Activated CD4-positive, alpha-beta T cell treated with anti-CD3 and anti-CD28 coated beads, Interleukin-2, amount 10 ng/mL, durations not matched to agents 24 days and 14 days (primary cell): ENCODE measurements at regions of chr17 and their contacts with region 1.

Region 1: GRCh38 chr17:49191917-49192741 is 18.2 kb downstream of the GNGT2 start:
- DNase-seq: peak; percentile 98
- H3K4me3 Mint-ChIP-seq: peak overlapping the region; percentile 95
- H3K27ac Mint-ChIP-seq: peak overlapping the region; percentile 99
- H3K4me1 Mint-ChIP-seq: peaks cover 48% of the 10 kb centered on the region
- H3K27me3 Mint-ChIP-seq: no peaks in the 10 kb centered on the region

Region 2: GRCh38 chr17:48892940-48893645 is 299.0 kb before region 1 on chr17:
- intact Hi-C with region 1: loop called (anchors 1 kb)
- DNase-seq: no peak
- H3K4me3 Mint-ChIP-seq: peak overlapping the region; percentile 90
- H3K27ac Mint-ChIP-seq: peak overlapping the region; percentile 97
- H3K4me1 Mint-ChIP-seq: peaks cover 18% of the 10 kb centered on the region
- H3K27me3 Mint-ChIP-seq: peaks cover 3% of the 10 kb centered on the region

Region 3: GRCh38 chr17:49146620-49147306 is 45.4 kb before region 1 on chr17:
- intact Hi-C with region 1: no loop called
- DNase-seq: no peak
- H3K4me3 Mint-ChIP-seq: no peak overlapping the region
- H3K27ac Mint-ChIP-seq: no peak overlapping the region
- H3K4me1 Mint-ChIP-seq: no peaks in the 10 kb centered on the region
- H3K27me3 Mint-ChIP-seq: peaks cover 31% of the 10 kb centered on the region

Region 4: GRCh38 chr17:49210158-49211029 is 18.3 kb after region 1 on chr17 and contains the starts of genes ABI3 and GNGT2:
- intact Hi-C with region 1: loop called (anchors 1 kb)
- DNase-seq: peak; percentile 91
- H3K4me3 Mint-ChIP-seq: peak within 1 kb of the TSS; percentile 95
- H3K27ac Mint-ChIP-seq: peak within 1 kb of the TSS; percentile 86
- H3K4me1 Mint-ChIP-seq: peaks cover 56% of the 10 kb centered on the region
- H3K27me3 Mint-ChIP-seq: no peaks in the 10 kb centered on the region
- total RNA-seq, gene ABI3: 27.8 and 28.4 TPM in 2 replicates
- total RNA-seq, gene GNGT2: 18.2 and 19.5 TPM in 2 replicates

Region 5: GRCh38 chr17:49230636-49231562 is 38.8 kb after region 1 on chr17 and contains the start of gene PHOSPHO1:
- intact Hi-C with region 1: loop called (anchors 1 kb)
- DNase-seq: peak; percentile 96
- H3K4me3 Mint-ChIP-seq: peak within 1 kb of the TSS; percentile 84
- H3K27ac Mint-ChIP-seq: no peak within 1 kb of the TSS
- H3K4me1 Mint-ChIP-seq: peaks cover 8% of the 10 kb centered on the region
- H3K27me3 Mint-ChIP-seq: peaks cover 29% of the 10 kb centered on the region
- total RNA-seq, gene PHOSPHO1: 0.09 TPM in 1 of 2 replicates, not detected in the other

Region 6: DNA sequence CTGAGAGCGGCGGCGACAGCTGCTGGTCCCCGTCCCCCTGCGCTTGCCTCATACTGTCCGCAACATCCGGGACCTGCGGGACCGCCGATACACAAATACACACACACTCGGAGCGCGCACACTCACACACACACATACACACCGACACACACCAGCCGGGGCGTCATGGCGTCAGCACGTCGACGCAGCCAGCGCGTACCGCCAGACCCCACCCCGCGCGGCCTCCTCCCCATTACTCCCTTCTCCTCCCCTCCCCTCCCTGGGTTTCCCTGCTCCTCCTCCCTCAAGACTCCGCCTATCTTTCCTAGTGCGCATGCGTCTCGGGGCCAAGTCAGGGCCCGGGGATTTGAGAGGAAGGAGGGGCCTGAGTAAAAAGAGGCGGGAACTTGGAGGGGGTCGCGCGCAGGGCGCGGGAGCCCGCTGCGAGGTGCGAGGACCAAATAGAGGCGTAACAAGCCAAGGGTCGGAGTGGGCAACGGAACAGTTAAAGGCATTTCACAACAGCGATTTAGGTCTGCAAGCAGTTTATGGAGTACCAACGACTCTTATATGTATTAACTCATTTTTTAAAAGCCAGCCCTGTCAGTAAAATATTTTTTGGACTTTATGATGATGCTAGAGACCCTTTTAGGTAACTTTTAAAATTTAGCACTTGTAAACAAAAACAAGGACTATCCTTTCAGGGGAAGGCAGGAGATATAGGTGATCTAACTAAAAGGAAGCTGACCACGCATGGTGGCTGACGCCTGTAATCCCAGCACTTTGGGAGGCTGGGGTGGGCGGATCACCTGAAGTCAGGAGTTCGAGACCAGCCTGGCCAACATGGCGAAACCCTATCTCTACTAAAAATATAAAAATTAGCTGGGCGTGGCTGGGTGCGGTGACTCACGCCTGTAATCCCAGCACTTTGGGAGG is 486.1 kb after region 1 on chr17 and contains the start of gene SPOP:
- intact Hi-C with region 1: loop called (anchors 2 kb)
- DNase-seq: peak; percentile 100
- H3K4me3 Mint-ChIP-seq: peak within 1 kb of the TSS; percentile 95
- H3K27ac Mint-ChIP-seq: peak within 1 kb of the TSS; percentile 99
- H3K4me1 Mint-ChIP-seq: peaks cover 44% of the 10 kb centered on the region
- H3K27me3 Mint-ChIP-seq: peaks cover 7% of the 10 kb centered on the region
- total RNA-seq, gene SPOP: 56.0 and 61.4 TPM in 2 replicates